ENCODE measurements at regions of chr14 and their contacts with region 1.

Region 1: GRCh38 chr14:65824285-65824977 is 411.9 kb downstream of the FUT8 start:
- DNase-seq: peak; percentile 82
- ATAC-seq: peak; percentile 90
- H3K4me3 Mint-ChIP-seq: no peak overlapping the region
- H3K27ac Mint-ChIP-seq: peak overlapping the region; percentile 62
- H3K4me1 Mint-ChIP-seq: peaks cover 7% of the 10 kb centered on the region
- H3K27me3 Mint-ChIP-seq: no peaks in the 10 kb centered on the region

Region 2: GRCh38 chr14:65164068-65164824 is 660.2 kb before region 1 on chr14:
- CTCF ChIA-PET with region 1: interaction called, 31 read pairs
- DNase-seq: peak; percentile 48
- ATAC-seq: peak; percentile 68
- H3K4me3 Mint-ChIP-seq: no peak overlapping the region
- H3K27ac Mint-ChIP-seq: no peak overlapping the region
- H3K4me1 Mint-ChIP-seq: peaks cover 19% of the 10 kb centered on the region
- H3K27me3 Mint-ChIP-seq: no peaks in the 10 kb centered on the region

Region 3: DNA sequence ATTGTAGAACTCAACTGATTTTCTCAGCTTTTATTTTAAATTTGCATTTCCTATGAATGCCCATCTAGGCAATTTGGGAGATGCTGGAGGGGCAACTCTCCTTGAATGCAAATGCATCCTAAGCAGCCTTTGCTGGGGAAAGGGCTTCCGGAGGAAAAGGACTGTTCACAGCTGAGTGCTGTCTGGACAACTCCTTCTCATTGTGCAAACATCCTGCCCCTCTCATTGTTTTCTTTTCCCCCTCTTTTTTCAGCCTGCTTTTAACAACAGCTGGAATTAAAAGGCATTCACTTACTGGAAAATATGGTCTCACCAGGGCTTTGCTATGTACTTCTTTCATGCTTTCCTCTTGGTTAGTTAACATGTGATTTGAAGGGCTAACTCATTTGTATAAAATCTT is 14.1 kb before region 1 on chr14:
- CTCF ChIA-PET with region 1: interaction called, 14 read pairs
- DNase-seq: no peak
- ATAC-seq: no peak
- H3K4me3 Mint-ChIP-seq: no peak overlapping the region
- H3K27ac Mint-ChIP-seq: no peak overlapping the region
- H3K4me1 Mint-ChIP-seq: no peaks in the 10 kb centered on the region
- H3K27me3 Mint-ChIP-seq: peaks cover 10% of the 10 kb centered on the region

Region 4: DNA sequence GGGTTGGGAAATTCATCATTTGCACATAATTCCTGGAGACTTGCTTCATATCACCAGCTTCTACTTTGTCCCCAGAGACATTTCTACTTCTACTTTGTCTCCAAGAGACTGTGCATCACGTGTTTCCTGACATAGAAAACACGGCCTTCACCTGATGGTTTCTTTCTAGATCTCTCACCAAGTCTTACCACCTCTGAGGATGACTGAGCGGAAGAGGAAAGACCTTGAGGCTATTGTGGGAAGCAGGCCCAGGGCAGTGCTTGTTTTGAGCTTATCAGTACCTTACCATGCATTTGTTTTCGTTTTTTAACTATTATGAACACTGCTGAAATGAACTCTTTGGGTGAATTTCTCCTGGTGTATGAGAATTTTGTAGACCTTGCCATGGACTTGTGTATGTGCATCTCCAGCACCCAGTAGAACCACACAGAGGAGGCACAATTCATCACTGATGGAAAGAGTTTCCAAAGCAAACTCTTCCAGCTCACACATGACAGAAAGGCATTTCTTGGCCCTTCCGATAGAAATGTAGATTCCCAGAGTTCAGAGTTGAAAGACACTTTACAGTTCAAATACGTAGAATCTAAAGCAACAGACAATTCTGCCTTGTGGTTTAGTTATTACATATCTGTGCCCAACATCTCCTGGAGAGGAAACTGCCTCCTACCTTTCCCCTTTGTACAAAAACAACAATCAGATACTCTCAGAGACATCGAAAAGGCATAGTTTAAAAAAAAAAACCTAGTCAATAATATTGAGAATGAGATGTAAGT is 22.8 kb after region 1 on chr14:
- CTCF ChIA-PET with region 1: interaction called, 31 read pairs
- DNase-seq: peak; percentile 94
- ATAC-seq: peak; percentile 84
- H3K4me3 Mint-ChIP-seq: peak overlapping the region; percentile 62
- H3K27ac Mint-ChIP-seq: peak overlapping the region; percentile 96
- H3K4me1 Mint-ChIP-seq: peaks cover 72% of the 10 kb centered on the region
- H3K27me3 Mint-ChIP-seq: no peaks in the 10 kb centered on the region

Region 5: DNA sequence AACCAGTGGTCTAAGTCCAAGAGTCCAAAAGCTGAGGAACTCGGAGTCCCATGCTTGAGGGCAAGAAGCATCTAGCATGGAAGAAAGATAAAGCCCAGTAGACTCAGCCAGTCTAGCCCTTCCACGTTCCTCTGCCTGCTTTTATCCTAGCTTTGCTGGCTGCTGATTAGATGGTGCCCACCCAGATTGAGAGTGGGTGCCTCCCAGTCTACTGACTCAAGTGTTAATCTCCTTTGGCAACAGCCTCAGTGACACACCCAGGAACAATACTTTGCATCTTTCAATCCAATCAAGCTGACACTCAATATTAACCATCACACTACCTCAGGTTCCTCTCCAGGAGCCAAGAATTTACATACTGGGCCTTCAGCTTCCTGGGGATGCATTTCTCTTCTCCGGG is 64.2 kb after region 1 on chr14:
- CTCF ChIA-PET with region 1: no interaction called
- DNase-seq: no peak
- ATAC-seq: no peak
- H3K4me3 Mint-ChIP-seq: no peak overlapping the region
- H3K27ac Mint-ChIP-seq: no peak overlapping the region
- H3K4me1 Mint-ChIP-seq: peaks cover 3% of the 10 kb centered on the region
- H3K27me3 Mint-ChIP-seq: no peaks in the 10 kb centered on the region

Region 6: DNA sequence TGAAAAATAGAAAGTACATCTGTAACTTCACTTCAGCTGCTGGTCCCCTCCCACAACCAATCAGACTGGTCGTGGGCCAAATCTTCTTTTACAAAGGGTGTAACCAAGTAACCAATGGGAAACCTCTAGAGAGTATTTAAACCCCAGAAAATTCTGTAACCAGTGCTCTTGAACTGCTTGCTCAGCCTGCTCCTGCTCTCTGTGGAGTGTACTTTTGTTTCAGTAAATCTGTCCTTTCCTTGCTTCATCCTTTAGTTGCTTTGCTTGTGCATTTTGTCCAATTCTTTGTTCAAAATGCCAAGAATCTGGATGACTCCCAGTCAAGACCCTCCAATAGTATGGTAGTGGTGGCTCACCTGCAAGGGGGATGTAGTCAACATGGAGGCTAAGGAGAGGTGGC is 77.2 kb after region 1 on chr14:
- CTCF ChIA-PET with region 1: no interaction called
- DNase-seq: no peak
- ATAC-seq: no peak
- H3K4me3 Mint-ChIP-seq: no peak overlapping the region
- H3K27ac Mint-ChIP-seq: no peak overlapping the region
- H3K4me1 Mint-ChIP-seq: peaks cover 3% of the 10 kb centered on the region
- H3K27me3 Mint-ChIP-seq: peaks cover 3% of the 10 kb centered on the region

Region 7: DNA sequence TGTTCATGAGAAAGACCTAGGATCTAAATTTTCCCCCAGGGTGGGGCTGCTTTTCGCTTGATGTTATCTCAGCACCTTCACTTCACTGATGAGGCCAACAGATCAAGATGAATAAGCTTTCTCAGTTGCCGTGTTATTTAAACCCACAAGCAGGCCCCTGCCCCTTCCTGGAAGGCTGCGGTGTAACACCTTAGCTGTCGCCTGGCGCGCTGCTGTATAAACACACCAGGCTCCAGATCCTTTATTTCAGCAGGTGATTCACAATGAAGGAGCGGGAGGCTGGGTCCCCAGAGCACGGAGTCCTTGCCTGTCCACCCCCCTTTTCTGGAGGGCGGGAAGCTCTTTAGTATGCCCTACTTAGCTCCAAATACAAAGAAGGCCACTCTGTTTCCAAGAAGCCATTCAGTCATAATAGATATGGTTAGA is 103.5 kb after region 1 on chr14:
- CTCF ChIA-PET with region 1: interaction called, 11 read pairs
- DNase-seq: peak; percentile 95
- ATAC-seq: peak; percentile 95
- H3K4me3 Mint-ChIP-seq: peak overlapping the region; percentile 27
- H3K27ac Mint-ChIP-seq: peak overlapping the region; percentile 94
- H3K4me1 Mint-ChIP-seq: peaks cover 57% of the 10 kb centered on the region
- H3K27me3 Mint-ChIP-seq: no peaks in the 10 kb centered on the region

Region 8: GRCh38 chr14:66070509-66071319 is 246.3 kb after region 1 on chr14:
- CTCF ChIA-PET with region 1: interaction called, 13 read pairs
- DNase-seq: peak; percentile 73
- ATAC-seq: peak; percentile 73
- H3K4me3 Mint-ChIP-seq: no peak overlapping the region
- H3K27ac Mint-ChIP-seq: no peak overlapping the region
- H3K4me1 Mint-ChIP-seq: peaks cover 1% of the 10 kb centered on the region
- H3K27me3 Mint-ChIP-seq: peaks cover 13% of the 10 kb centered on the region

Measured in activated CD8-positive, alpha-beta memory T cell treated with anti-CD3 and anti-CD28 coated beads, Interleukin-2, amount 10 ng/mL, durations not matched to agents 7 days and 5 days (primary cell).